Spleen (tissue), 13 donors: ENCODE measurements at regions of chr16 and their contacts with region 1.

Region 1: GRCh38 chr16:27313422-27314160 is at the start of gene IL4R:
- DNase-seq: peak; percentile 93
- H3K4me3 ChIP-seq: peak within 1 kb of the TSS; percentile 62 to 85 (median 80)
- H3K27ac ChIP-seq: peak within 1 kb of the TSS; percentile 95 to 100 (median 98)
- H3K4me1 ChIP-seq: peaks cover 40 to 83% (median 60%) of the 10 kb centered on the region in 6 donors
- H3K27me3 ChIP-seq: no peaks in the 10 kb centered on the region
- CTCF ChIP-seq: no peak
- POLR2A ChIP-seq: no peak
- total RNA-seq, gene IL4R: 78.0 to 319 (median 215) TPM

Region 2: GRCh38 chr16:27268376-27269299 is 45.0 kb before region 1 on chr16 and contains the start of gene NSMCE1:
- intact Hi-C with region 1: loop called (anchors 10 kb)
- DNase-seq: peak; percentile 98
- H3K4me3 ChIP-seq: peak within 1 kb of the TSS; percentile 59 to 89 (median 71)
- H3K27ac ChIP-seq: peak within 1 kb of the TSS; percentile 91 to 95 (median 92)
- H3K4me1 ChIP-seq: peaks cover 7 to 82% (median 27%) of the 10 kb centered on the region in 6 donors
- H3K27me3 ChIP-seq: no peaks in the 10 kb centered on the region
- CTCF ChIP-seq: peak in 9 of 11 experiments; percentile 42 to 71 (median 55)
- POLR2A ChIP-seq: peak; percentile 37 to 55 (median 43)
- total RNA-seq, gene NSMCE1: 18.4 to 41.4 (median 31.7) TPM